GM12878 (cell line): ENCODE measurements at regions of chr3 and their contacts with region 1.

Region 1: GRCh38 chr3:15268033-15268631 is 62.1 kb downstream of the CAPN7 start:
- DNase-seq: no peak
- ATAC-seq: peak; percentile 80
- H3K4me3 ChIP-seq: no peak overlapping the region
- H3K27ac ChIP-seq: no peak overlapping the region
- H3K4me1 ChIP-seq: peaks cover 39% of the 10 kb centered on the region
- H3K27me3 ChIP-seq: no peaks in the 10 kb centered on the region
- CTCF ChIP-seq: peak; percentile 95 to 99 (median 97); a peak in 5 of 6 replicates
- EP300 ChIP-seq: no peak
- POLR2A ChIP-seq: no peak
- RAD21 ChIP-seq: peak; percentile 100

Region 2: DNA sequence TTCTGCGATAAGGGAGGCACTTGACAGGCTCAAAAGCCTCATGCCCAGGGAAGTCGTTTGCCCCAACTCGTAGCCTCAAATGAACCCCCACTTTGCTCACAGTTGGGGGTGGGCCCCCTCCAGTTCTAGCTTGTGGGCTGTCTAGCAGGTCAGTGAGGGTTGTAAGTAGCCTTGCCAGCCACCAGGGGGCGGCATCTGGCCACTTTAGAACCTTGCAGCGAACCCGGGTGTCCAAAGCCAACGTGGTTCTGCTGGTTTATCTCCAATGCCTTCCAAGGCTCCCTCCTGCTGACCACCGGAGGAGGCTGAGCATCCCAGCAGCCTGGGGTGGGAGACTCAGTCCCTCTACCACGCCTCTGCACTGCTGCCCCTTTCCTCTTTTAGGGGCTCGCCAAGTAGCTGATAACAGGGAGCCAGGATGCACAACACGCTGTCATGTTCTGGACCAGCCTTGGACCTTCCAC is 160.0 kb before region 1 on chr3:
- CTCF ChIA-PET with region 1: interaction called, 25 read pairs
- POLR2A ChIA-PET with region 1: no interaction called
- RAD21 ChIA-PET with region 1: interaction called, 9 read pairs
- SMC1A ChIA-PET with region 1: interaction called, 13 read pairs
- in situ Hi-C with region 1: no loop called
- intact Hi-C with region 1: no loop called
- DNase-seq: no peak
- ATAC-seq: peak; percentile 99
- H3K4me3 ChIP-seq: no peak overlapping the region
- H3K27ac ChIP-seq: no peak overlapping the region
- H3K4me1 ChIP-seq: no peaks in the 10 kb centered on the region
- H3K27me3 ChIP-seq: no peaks in the 10 kb centered on the region
- CTCF ChIP-seq: peak; percentile 94 to 98 (median 94)
- EP300 ChIP-seq: no peak
- POLR2A ChIP-seq: no peak
- RAD21 ChIP-seq: peak; percentile 82

Region 3: DNA sequence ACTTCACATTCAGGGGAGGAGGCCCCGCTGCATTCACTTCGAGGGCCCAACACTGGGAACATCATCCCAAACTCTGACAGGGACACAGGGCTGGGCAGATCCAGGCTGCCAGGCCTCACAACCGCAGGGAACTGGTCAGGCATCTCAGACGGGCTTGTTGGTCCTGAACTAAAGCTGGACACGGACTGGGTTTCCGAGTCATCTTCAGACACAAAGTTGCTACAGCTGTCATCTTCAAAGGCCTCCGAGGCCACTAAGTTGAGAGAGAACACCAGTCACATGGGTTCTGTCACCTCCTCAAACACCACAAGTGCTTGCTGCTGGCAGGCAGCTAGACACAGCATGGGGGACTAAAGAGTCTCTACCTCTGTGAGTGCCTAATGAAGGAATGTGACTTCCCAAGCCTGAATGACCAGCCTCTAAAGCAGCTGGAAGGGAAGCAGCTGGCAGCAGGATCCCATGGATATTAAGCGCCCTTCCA is 11.2 kb before region 1 on chr3:
- CTCF ChIA-PET with region 1: interaction called, 31 read pairs
- POLR2A ChIA-PET with region 1: interaction called, 3 read pairs
- RAD21 ChIA-PET with region 1: interaction called, 14 read pairs
- SMC1A ChIA-PET with region 1: interaction called, 5 read pairs
- in situ Hi-C with region 1: no loop called
- intact Hi-C with region 1: no loop called
- DNase-seq: no peak
- ATAC-seq: no peak
- H3K4me3 ChIP-seq: no peak overlapping the region
- H3K27ac ChIP-seq: no peak overlapping the region
- H3K4me1 ChIP-seq: no peaks in the 10 kb centered on the region
- H3K27me3 ChIP-seq: no peaks in the 10 kb centered on the region
- CTCF ChIP-seq: no peak
- EP300 ChIP-seq: no peak
- POLR2A ChIP-seq: peak; percentile 13; the same call in 1 of the 2 replicates
- RAD21 ChIP-seq: no peak

Region 4: GRCh38 chr3:15319575-15319974 is 51.4 kb after region 1 on chr3:
- CTCF ChIA-PET with region 1: interaction called, 10 read pairs
- POLR2A ChIA-PET with region 1: interaction called, 3 read pairs
- RAD21 ChIA-PET with region 1: interaction called, 5 read pairs
- SMC1A ChIA-PET with region 1: interaction called, 21 read pairs
- in situ Hi-C with region 1: no loop called
- intact Hi-C with region 1: no loop called
- DNase-seq: no peak
- ATAC-seq: 0 out of 3 replicates have a peak, but pooled peaks have one; percentile 2
- H3K4me3 ChIP-seq: no peak overlapping the region
- H3K27ac ChIP-seq: no peak overlapping the region
- H3K4me1 ChIP-seq: peaks cover 38% of the 10 kb centered on the region
- H3K27me3 ChIP-seq: no peaks in the 10 kb centered on the region
- CTCF ChIP-seq: no peak
- EP300 ChIP-seq: no peak
- POLR2A ChIP-seq: no peak
- RAD21 ChIP-seq: no peak

Region 5: GRCh38 chr3:15367059-15367458 is 98.9 kb after region 1 on chr3:
- CTCF ChIA-PET with region 1: interaction called, 228 read pairs
- POLR2A ChIA-PET with region 1: interaction called, 5 read pairs
- RAD21 ChIA-PET with region 1: interaction called, 27 read pairs
- SMC1A ChIA-PET with region 1: interaction called, 40 read pairs
- in situ Hi-C with region 1: no loop called
- intact Hi-C with region 1: loop called (anchors 1 kb)
- DNase-seq: no peak
- ATAC-seq: peak; percentile 13
- H3K4me3 ChIP-seq: no peak overlapping the region
- H3K27ac ChIP-seq: no peak overlapping the region
- H3K4me1 ChIP-seq: peaks cover 24% of the 10 kb centered on the region
- H3K27me3 ChIP-seq: no peaks in the 10 kb centered on the region
- CTCF ChIP-seq: no peak
- EP300 ChIP-seq: 0 out of 4 replicates have a peak, but pooled peaks of 1 of the 2 experiments have one; percentile 33
- POLR2A ChIP-seq: no peak
- RAD21 ChIP-seq: no peak

Region 6: GRCh38 chr3:15405448-15406050 is 137.4 kb after region 1 on chr3:
- CTCF ChIA-PET with region 1: interaction called, 302 read pairs
- POLR2A ChIA-PET with region 1: interaction called, 10 read pairs
- RAD21 ChIA-PET with region 1: interaction called, 143 read pairs
- SMC1A ChIA-PET with region 1: interaction called, 223 read pairs
- in situ Hi-C with region 1: no loop called
- intact Hi-C with region 1: loop called (anchors 1 kb)
- DNase-seq: no peak
- ATAC-seq: peak; percentile 97
- H3K4me3 ChIP-seq: no peak overlapping the region
- H3K27ac ChIP-seq: no peak overlapping the region
- H3K4me1 ChIP-seq: peaks cover 5% of the 10 kb centered on the region
- H3K27me3 ChIP-seq: no peaks in the 10 kb centered on the region
- CTCF ChIP-seq: peak; percentile 44 to 75 (median 58); a peak in 5 of 6 replicates
- EP300 ChIP-seq: no peak
- POLR2A ChIP-seq: no peak
- RAD21 ChIP-seq: peak; percentile 69

Region 7: DNA sequence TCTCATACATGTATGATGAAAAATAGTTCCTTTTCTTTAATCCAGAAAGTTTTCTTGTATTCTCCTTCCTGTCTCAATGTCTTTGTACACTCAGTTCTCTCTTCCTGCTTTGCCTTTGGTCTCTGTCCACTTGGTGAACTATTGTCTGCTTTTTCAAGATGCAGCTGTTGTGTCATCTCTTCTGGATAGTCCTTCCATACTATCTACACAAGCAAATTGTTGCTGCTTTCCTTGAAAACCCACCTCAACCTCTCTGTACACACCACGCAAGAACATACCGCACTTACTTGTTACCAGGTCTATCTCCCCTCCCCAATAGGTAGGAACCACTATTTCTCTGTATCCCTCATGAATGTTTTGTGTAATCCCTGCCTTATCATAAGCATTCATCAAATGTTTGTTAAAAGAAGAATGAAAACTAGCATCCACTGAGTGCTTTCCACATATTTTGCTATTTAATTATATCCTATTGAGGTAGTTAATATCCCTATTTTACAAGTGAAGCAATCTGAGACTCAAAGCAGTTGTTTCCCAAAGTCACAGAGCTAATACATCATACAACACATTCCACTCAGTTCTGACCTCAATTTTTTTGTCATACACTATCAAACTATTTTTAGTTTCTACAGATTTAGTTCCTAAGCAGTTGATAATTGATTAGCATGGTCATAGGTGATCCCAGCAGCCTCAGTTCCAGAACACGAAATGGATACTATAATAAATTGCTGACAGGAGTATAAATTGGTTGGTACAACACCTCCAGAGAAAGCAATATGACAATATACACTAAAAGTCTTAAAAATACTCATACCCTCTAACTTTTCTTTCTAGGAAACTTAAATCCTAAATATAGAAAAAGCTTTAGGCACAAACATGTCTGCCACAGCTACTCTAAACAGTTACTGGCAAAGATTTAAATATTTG is 313.6 kb after region 1 on chr3:
- CTCF ChIA-PET with region 1: no interaction called
- POLR2A ChIA-PET with region 1: no interaction called
- RAD21 ChIA-PET with region 1: no interaction called
- SMC1A ChIA-PET with region 1: no interaction called
- in situ Hi-C with region 1: no loop called
- intact Hi-C with region 1: no loop called
- DNase-seq: no peak
- ATAC-seq: no peak
- H3K4me3 ChIP-seq: no peak overlapping the region
- H3K27ac ChIP-seq: no peak overlapping the region
- H3K4me1 ChIP-seq: no peaks in the 10 kb centered on the region
- H3K27me3 ChIP-seq: no peaks in the 10 kb centered on the region
- CTCF ChIP-seq: no peak
- EP300 ChIP-seq: no peak
- POLR2A ChIP-seq: no peak
- RAD21 ChIP-seq: no peak